ENCODE measurements at regions of chr5 and their contacts with region 1.

Region 1: GRCh38 chr5:169801324-169801777 is 164.3 kb downstream of the DOCK2 start:
- DNase-seq: peak; percentile 86
- ATAC-seq: peak; percentile 95
- H3K4me3 ChIP-seq: no peak overlapping the region
- H3K27ac ChIP-seq: no peak overlapping the region
- H3K4me1 ChIP-seq: peaks cover 10% of the 10 kb centered on the region
- H3K27me3 ChIP-seq: no peaks in the 10 kb centered on the region
- CTCF ChIP-seq: no peak

Region 2: GRCh38 chr5:169521366-169521983 is 279.9 kb before region 1 on chr5:
- CTCF ChIA-PET with region 1: no interaction called
- POLR2A ChIA-PET with region 1: no interaction called
- intact Hi-C with region 1: no loop called
- DNase-seq: no peak
- ATAC-seq: no peak
- H3K4me3 ChIP-seq: no peak overlapping the region
- H3K27ac ChIP-seq: no peak overlapping the region
- H3K4me1 ChIP-seq: no peaks in the 10 kb centered on the region
- H3K27me3 ChIP-seq: peaks cover 44% of the 10 kb centered on the region
- CTCF ChIP-seq: no peak

Region 3: DNA sequence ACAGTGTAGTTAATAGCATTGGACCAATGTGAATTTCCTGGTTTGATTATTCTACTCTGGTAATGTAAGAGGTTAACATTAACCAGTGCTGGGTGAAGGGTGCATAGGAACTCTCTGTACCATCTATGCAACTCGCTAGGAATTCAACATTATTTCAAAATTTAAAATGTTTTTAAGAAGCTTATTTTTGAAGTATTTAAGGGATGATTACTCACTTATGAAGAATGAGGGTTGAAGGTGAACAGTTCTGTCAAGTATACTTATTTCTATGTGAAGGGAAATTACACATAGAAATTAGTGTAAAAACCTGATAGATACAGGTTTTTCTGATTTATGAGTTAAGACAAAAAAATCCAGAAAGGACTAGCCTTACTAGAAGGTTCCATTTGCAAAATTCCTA is 13.2 kb after region 1 on chr5:
- CTCF ChIA-PET with region 1: no interaction called
- POLR2A ChIA-PET with region 1: interaction called, 14 read pairs
- intact Hi-C with region 1: no loop called
- DNase-seq: no peak
- ATAC-seq: no peak
- H3K4me3 ChIP-seq: no peak overlapping the region
- H3K27ac ChIP-seq: no peak overlapping the region
- H3K4me1 ChIP-seq: no peaks in the 10 kb centered on the region
- H3K27me3 ChIP-seq: no peaks in the 10 kb centered on the region
- CTCF ChIP-seq: no peak

Measured in PC-3 (cell line).